ENCODE measurements at regions of chr11 and their contacts with region 1.

Region 1: DNA sequence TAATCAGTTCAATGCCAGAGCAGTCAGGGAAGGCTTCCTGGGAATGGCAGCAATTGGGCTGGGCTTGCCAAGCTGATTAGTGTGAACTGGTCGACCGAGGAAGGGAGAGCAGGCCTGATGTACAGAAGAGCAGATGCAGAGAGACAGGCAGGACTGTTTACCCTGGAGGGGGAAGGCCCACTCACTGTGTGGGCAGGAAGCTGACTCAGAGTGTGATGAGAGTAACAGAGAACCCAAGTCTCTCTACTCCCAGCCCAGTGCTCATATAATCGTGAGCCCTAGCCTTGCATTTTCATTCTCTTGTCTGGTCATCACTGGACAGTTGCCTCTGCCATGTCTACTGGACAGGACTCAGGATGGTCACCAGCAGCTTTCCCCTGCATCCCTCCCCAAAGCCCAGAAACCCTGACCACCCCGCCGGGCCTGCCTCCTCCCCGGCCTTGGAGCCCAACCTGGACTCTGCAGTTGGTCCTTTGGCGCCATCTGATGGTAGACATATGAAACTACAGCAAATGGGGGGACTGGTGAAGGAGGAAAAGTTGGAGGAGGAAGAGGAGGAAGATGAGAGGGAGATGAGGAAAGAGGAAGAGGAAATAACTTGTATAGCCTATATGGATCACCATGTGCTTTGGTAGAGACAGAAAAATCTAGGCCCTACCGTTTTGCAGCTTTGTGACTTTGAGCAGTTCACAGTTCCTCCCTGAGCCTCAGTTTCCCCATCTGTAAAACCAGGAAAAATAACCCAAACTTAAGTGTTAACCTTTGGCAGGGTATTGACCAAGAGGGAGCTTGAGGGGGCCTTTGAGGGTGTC is 43.4 kb upstream of the PRDM11 start:
- DNase-seq: peak; percentile 65 to 86
- ATAC-seq: peak; percentile 94 to 97 (median 97)
- H3K4me3 ChIP-seq: peak overlapping the region; percentile 9
- H3K4me3 Mint-ChIP-seq: peak overlapping the region; percentile 76
- H3K27ac ChIP-seq: peak overlapping the region; percentile 63
- H3K27ac Mint-ChIP-seq: peak overlapping the region; percentile 59 to 70
- H3K4me1 ChIP-seq: peaks cover 17% of the 10 kb centered on the region
- H3K4me1 Mint-ChIP-seq: peaks cover 24 to 32% of the 10 kb centered on the region in 2 donors
- H3K27me3 ChIP-seq: no peaks in the 10 kb centered on the region
- H3K27me3 Mint-ChIP-seq: peaks cover 20 to 35% of the 10 kb centered on the region in 2 donors
- CTCF ChIP-seq: peak; percentile 98

Region 2: DNA sequence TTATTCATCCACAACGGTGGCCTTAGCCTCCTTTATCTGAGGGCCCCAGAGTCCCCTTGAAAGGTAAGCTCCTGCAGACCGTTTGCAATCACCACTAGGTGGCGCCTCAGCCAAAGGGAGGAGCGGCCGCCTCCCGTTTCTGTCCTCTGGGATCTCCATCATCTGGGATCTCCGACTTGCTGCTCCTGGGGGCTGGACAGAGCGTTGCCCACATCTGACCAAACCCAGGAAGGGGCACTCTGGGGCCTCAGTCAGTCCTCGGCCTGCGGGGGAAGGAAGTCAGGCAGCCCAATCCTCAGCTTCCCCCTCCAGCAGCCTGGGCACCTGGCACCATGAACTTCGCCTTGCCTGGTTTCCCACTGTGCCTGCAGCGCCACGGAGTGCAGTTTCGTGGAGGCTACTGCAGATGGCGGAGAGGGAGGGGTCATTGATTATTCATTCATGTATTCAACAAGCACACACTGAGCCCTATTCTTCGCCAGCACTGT is 175.8 kb before region 1 on chr11:
- intact Hi-C with region 1: loop called (anchors 1 kb)
- DNase-seq: peak; percentile 53 to 78
- ATAC-seq: peak; percentile 42 to 73 (median 59)
- H3K4me3 ChIP-seq: no peak overlapping the region
- H3K4me3 Mint-ChIP-seq: no peak overlapping the region
- H3K27ac ChIP-seq: no peak overlapping the region
- H3K27ac Mint-ChIP-seq: no peak overlapping the region
- H3K4me1 ChIP-seq: no peaks in the 10 kb centered on the region
- H3K4me1 Mint-ChIP-seq: peaks cover 0 to 6% of the 10 kb centered on the region in 2 donors
- H3K27me3 ChIP-seq: no peaks in the 10 kb centered on the region
- H3K27me3 Mint-ChIP-seq: peaks cover 13 to 18% of the 10 kb centered on the region in 2 donors
- CTCF ChIP-seq: peak; percentile 90

Region 3: DNA sequence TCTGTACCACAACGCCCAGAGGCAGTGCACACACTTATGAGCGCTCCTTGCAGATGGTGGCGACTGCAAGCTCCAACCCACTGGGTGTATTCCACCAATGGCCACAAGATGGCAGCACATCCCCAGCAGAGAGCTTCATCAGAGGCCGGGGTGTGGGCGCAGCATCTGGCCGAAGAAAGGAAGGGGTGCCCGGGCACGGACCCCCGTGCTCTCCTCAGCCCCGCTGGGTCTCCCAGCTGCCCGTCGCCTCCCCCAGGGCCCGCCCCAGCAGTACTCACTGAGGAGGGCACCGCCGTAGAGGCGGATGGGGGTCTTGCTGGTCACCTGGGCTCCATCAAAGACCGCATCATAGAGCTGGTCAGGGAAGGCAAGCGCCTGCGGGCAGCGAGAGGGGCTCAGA is 166.5 kb before region 1 on chr11:
- intact Hi-C with region 1: loop called (anchors 1 kb)
- DNase-seq: peak; percentile 81 to 91
- ATAC-seq: peak; percentile 80 to 97 (median 96)
- H3K4me3 ChIP-seq: no peak overlapping the region
- H3K4me3 Mint-ChIP-seq: no peak overlapping the region
- H3K27ac ChIP-seq: no peak overlapping the region
- H3K27ac Mint-ChIP-seq: peak overlapping the region in 1 of 2 donors; percentile 38
- H3K4me1 ChIP-seq: peaks cover 6% of the 10 kb centered on the region
- H3K4me1 Mint-ChIP-seq: peaks cover 0 to 4% of the 10 kb centered on the region in 2 donors
- H3K27me3 ChIP-seq: no peaks in the 10 kb centered on the region
- H3K27me3 Mint-ChIP-seq: no peaks in the 10 kb centered on the region
- CTCF ChIP-seq: peak; percentile 91

Region 4: DNA sequence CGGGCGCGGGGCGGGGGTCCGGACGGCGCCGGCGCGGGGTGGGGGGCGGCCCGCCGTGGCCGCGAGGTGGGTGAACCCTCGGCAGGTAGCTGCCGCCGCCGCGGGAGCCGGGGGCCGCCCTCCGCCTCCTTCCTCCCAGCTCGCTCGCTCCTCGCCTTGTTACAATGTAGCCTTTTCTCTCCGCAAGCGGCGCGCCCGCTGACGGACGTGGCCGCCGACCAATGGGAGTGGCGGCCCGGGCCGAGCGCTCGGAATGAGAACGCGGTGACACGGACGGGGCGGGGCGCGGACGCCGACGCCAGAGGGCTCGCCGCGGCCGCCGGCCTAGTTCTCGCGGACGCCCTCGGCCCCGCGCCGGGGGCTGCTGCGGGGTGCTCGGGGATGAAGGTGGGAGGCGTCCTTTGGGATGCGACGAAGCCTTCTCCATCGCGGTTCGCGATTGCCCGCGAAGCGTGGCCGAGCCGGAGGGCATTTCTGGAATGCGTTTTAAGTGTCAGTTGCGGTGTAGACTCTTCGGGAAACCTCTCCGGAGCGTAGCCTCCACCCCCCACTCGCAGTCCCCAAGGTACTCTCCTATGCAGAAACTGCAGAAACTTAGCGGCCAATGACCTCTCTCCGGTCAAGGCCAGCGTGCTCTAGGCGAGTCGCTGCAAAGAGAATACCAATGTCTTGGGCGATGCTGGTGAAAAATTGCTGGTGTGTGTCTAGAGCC is 44.2 kb after region 1 on chr11:
- intact Hi-C with region 1: no loop called
- DNase-seq: peak; percentile 93 to 95
- ATAC-seq: peak; percentile 93 to 97 (median 95)
- H3K4me3 ChIP-seq: peak overlapping the region; percentile 61
- H3K4me3 Mint-ChIP-seq: peak overlapping the region; percentile 92
- H3K27ac ChIP-seq: peak overlapping the region; percentile 62
- H3K27ac Mint-ChIP-seq: peak overlapping the region; percentile 93 to 97
- H3K4me1 ChIP-seq: peaks cover 22% of the 10 kb centered on the region
- H3K4me1 Mint-ChIP-seq: peaks cover 44 to 49% of the 10 kb centered on the region in 2 donors
- H3K27me3 ChIP-seq: no peaks in the 10 kb centered on the region
- H3K27me3 Mint-ChIP-seq: peaks cover 0 to 11% of the 10 kb centered on the region in 2 donors
- CTCF ChIP-seq: no peak